ENCODE measurements at regions of chr10 and their contacts with region 1.

Region 1: GRCh38 chr10:99620713-99621453 is 644 bp upstream of the SLC25A28 start:
- DNase-seq: peak; percentile 92 to 96 (median 95)
- ATAC-seq: peak; percentile 59 to 95 (median 93)
- H3K4me3 ChIP-seq: peak overlapping the region; percentile 32 to 98 (median 91)
- H3K27ac ChIP-seq: peak overlapping the region; percentile 91 to 100 (median 98)
- H3K4me1 ChIP-seq: peaks cover 10 to 48% (median 36%) of the 10 kb centered on the region in 12 donors
- H3K27me3 ChIP-seq: no peaks in the 10 kb centered on the region
- CTCF ChIP-seq: peak in 1 of 12 donors; percentile 12
- POLR2A ChIP-seq: peak; percentile 42 to 59

Region 2: DNA sequence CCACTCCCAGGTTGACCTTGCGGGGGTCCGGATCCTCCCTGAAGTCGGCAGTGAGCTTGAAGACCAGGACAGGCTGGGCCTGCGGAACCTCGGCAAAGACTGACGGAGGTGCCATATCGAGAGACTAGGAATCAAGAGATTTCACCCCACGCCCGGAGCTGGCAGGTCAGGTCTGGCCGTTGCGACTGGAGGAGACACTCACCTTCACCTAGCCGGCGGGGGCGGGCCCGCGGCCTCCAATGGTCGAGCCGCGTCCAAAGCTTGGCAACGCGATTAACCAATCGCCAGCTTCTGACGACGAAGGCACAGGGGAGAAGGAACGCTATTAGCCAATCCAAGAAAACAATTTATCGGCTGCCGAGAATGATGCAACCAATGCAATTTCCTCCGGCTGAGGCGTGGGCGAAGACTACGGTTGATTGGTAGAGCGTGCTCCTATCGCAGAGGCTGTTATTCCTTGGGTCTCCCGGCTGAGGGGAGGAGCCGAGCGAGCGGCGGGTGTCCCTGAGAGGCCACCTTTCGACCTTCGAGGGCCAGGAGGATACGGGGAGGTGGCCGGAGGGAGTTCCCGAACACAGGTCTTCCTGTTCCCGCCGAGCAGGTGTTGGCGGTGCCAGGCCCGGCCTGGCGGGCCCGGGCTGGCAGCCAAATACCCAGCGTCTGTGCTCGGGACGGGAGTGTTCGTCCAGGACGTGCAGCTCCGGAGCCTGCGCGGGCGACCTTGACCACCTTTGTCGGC is 190.3 kb before region 1 on chr10 and contains the start of gene GOT1:
- intact Hi-C with region 1: loop called in 1 of 10 experiments (anchors 2 kb)
- DNase-seq: peak; percentile 94 to 98 (median 96)
- ATAC-seq: peak; percentile 95 to 97 (median 96)
- H3K4me3 ChIP-seq: peak within 1 kb of the TSS; percentile 71 to 96 (median 85)
- H3K27ac ChIP-seq: peak within 1 kb of the TSS; percentile 90 to 99 (median 97)
- H3K4me1 ChIP-seq: peaks cover 0 to 56% (median 30%) of the 10 kb centered on the region in 12 donors
- H3K27me3 ChIP-seq: no peaks in the 10 kb centered on the region
- CTCF ChIP-seq: no peak
- POLR2A ChIP-seq: peak; percentile 50 to 81
- total RNA-seq, gene GOT1: 294 to 815 (median 505) TPM

Region 3: GRCh38 chr10:99659031-99659867 is 38.4 kb after region 1 on chr10 and contains the start of gene ENTPD7:
- intact Hi-C with region 1: loop called in 8 of 10 experiments (anchors 1 to 5 kb)
- DNase-seq: peak; percentile 95 to 97 (median 96)
- ATAC-seq: peak; percentile 99 to 100 (median 100)
- H3K4me3 ChIP-seq: peak within 1 kb of the TSS; percentile 63 to 98 (median 81)
- H3K27ac ChIP-seq: peak within 1 kb of the TSS in 9 of 12 donors; percentile 6 to 77 (median 45)
- H3K4me1 ChIP-seq: peaks cover 0 to 36% (median 17%) of the 10 kb centered on the region in 12 donors
- H3K27me3 ChIP-seq: no peaks in the 10 kb centered on the region
- CTCF ChIP-seq: peak in 11 of 12 donors; percentile 14 to 52 (median 36)
- POLR2A ChIP-seq: peak in 1 of 2 donors; percentile 53
- total RNA-seq, gene ENTPD7: 1.1 to 5.6 (median 2.7) TPM

Region 4: GRCh38 chr10:99732033-99732912 is 111.4 kb after region 1 on chr10 and contains the starts of genes COX15 and CUTC:
- intact Hi-C with region 1: loop called in 1 of 10 experiments (anchors 5 kb)
- DNase-seq: peak; percentile 97 to 98 (median 98)
- ATAC-seq: peak; percentile 98 to 99 (median 98)
- H3K4me3 ChIP-seq: peak within 1 kb of the TSS; percentile 62 to 99 (median 89)
- H3K27ac ChIP-seq: peak within 1 kb of the TSS; percentile 84 to 96 (median 92)
- H3K4me1 ChIP-seq: peaks cover 0 to 39% (median 18%) of the 10 kb centered on the region in 12 donors
- H3K27me3 ChIP-seq: no peaks in the 10 kb centered on the region
- CTCF ChIP-seq: peak in 4 of 12 donors; percentile 13 to 32 (median 23)
- POLR2A ChIP-seq: peak in 1 of 2 donors; percentile 83
- total RNA-seq, gene COX15: 28.5 to 45.2 (median 34.7) TPM
- total RNA-seq, gene CUTC: 27.0 to 53.2 (median 37.7) TPM

Measured in heart left ventricle (tissue), 16 donors.